ENCODE measurements at regions of chr2 and their contacts with region 1.

Region 1: DNA sequence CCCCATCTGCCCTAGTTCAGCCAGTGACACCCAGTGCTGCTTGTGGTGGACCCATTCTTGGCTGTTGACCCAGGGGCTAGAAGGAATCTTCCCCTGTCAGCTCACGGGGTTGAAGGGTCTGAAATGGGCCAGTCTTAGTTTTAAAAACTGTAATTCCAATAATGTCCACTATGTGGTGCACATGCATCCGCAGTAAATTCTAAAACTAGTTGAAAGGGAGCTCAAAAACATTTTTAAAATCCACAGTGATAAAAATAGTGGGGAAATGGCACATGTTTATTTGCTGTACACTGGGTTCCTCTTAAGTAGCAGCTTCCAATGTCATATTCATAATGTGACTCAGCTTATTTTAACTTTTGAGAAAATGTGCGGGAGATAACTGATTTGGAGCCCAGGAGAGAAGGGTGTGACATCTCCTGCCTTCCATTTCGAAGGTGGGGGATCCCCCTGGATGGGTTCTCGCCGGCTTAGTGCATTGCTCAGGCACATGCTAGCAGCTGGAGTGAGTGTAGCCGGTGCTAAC is 32.8 kb downstream of the GRHL1 start:
- DNase-seq: no peak
- H3K4me3 ChIP-seq: no peak overlapping the region
- H3K27ac ChIP-seq: peak overlapping the region; percentile 31 to 81 (median 72)
- H3K4me1 ChIP-seq: peaks cover 0 to 31% (median 26%) of the 10 kb centered on the region in 4 donors
- H3K27me3 ChIP-seq: no peaks in the 10 kb centered on the region
- CTCF ChIP-seq: peak; percentile 69 to 85 (median 74)
- EP300 ChIP-seq: no peak
- POLR2A ChIP-seq: no peak

Region 2: GRCh38 chr2:8378016-8378810 is 1606.1 kb before region 1 on chr2:
- intact Hi-C with region 1: no loop called
- DNase-seq: no peak
- H3K4me3 ChIP-seq: no peak overlapping the region
- H3K27ac ChIP-seq: no peak overlapping the region
- H3K4me1 ChIP-seq: no peaks in the 10 kb centered on the region
- H3K27me3 ChIP-seq: no peaks in the 10 kb centered on the region
- CTCF ChIP-seq: no peak
- EP300 ChIP-seq: no peak
- POLR2A ChIP-seq: no peak

Region 3: DNA sequence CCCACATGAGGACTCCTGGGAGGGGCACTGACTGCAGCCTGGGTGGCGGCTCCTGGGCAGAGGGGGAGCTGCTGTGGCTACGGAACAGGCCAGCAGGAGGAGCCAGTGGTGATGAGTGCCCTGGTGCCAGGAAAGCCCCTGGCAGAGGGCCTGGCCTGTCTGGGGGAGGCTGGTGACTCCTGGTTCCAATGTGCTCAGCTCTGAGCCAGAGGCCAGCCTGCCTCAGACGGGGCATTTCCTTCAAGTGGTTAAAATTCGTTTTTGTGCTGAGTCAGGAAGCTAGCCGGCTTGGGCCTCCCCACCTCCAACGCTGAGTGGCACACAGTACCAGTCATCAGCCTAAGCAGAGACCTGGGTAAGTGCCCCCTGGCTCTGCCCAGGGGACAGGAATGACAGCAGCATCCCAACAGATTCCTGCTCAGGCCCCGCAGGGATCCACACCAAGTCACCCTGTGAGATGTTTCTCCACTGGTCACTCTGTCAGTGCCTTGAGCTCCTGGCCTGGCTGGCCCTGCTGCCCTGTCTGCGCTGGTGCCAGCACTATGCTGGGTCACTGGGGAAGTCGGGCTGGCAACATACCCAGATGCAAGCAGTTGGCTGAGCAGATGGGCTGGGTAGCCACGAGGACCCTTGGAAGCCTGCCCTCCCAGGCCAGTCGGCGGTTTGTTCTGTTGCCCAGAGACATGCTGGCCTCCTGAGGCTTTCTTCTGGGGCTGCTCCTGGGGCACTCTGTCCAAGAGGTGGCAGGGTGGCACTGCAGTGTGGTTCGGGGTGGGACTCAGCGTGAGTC is 52.0 kb after region 1 on chr2:
- intact Hi-C with region 1: loop called (anchors 2 kb)
- DNase-seq: peak; percentile 91
- H3K4me3 ChIP-seq: no peak overlapping the region
- H3K27ac ChIP-seq: peak overlapping the region; percentile 64 to 96 (median 84)
- H3K4me1 ChIP-seq: peaks cover 0 to 62% (median 58%) of the 10 kb centered on the region in 4 donors
- H3K27me3 ChIP-seq: no peaks in the 10 kb centered on the region
- CTCF ChIP-seq: peak; percentile 30 to 48 (median 41)
- EP300 ChIP-seq: no peak
- POLR2A ChIP-seq: no peak

Region 4: GRCh38 chr2:10103179-10103732 is 119.0 kb after region 1 on chr2:
- intact Hi-C with region 1: no loop called
- DNase-seq: no peak
- H3K4me3 ChIP-seq: no peak overlapping the region
- H3K27ac ChIP-seq: no peak overlapping the region
- H3K4me1 ChIP-seq: no peaks in the 10 kb centered on the region
- H3K27me3 ChIP-seq: no peaks in the 10 kb centered on the region
- CTCF ChIP-seq: no peak
- EP300 ChIP-seq: no peak
- POLR2A ChIP-seq: no peak

Region 5: GRCh38 chr2:10408649-10409579 is 424.6 kb after region 1 on chr2:
- intact Hi-C with region 1: no loop called
- DNase-seq: peak; percentile 88
- H3K4me3 ChIP-seq: no peak overlapping the region
- H3K27ac ChIP-seq: peak overlapping the region; percentile 42 to 92 (median 84)
- H3K4me1 ChIP-seq: peaks cover 0 to 87% (median 61%) of the 10 kb centered on the region in 4 donors
- H3K27me3 ChIP-seq: no peaks in the 10 kb centered on the region
- CTCF ChIP-seq: peak; percentile 80 to 97 (median 90)
- EP300 ChIP-seq: no peak
- POLR2A ChIP-seq: no peak

Measured in sigmoid colon (tissue), 7 donors.